MCF 10A (cell line): ENCODE measurements at regions of chr14 and their contacts with region 1.

Region 1: GRCh38 chr14:21263656-21264411 is 5.4 kb downstream of the HNRNPC start:
- DNase-seq: peak; percentile 72
- H3K4me3 Mint-ChIP-seq: peak overlapping the region; percentile 90
- H3K27ac Mint-ChIP-seq: peak overlapping the region; percentile 74
- H3K4me1 Mint-ChIP-seq: peaks cover 44% of the 10 kb centered on the region
- H3K27me3 Mint-ChIP-seq: no peaks in the 10 kb centered on the region
- CTCF ChIP-seq: no peak

Region 2: GRCh38 chr14:21241218-21241819 is 22.5 kb before region 1 on chr14:
- CTCF ChIA-PET with region 1: interaction called, 9 read pairs
- POLR2A ChIA-PET with region 1: interaction called, 38 read pairs
- intact Hi-C with region 1: no loop called
- DNase-seq: peak; percentile 34
- H3K4me3 Mint-ChIP-seq: no peak overlapping the region
- H3K27ac Mint-ChIP-seq: peak overlapping the region; percentile 27
- H3K4me1 Mint-ChIP-seq: peaks cover 14% of the 10 kb centered on the region
- H3K27me3 Mint-ChIP-seq: no peaks in the 10 kb centered on the region
- CTCF ChIP-seq: peak; percentile 36

Region 3: DNA sequence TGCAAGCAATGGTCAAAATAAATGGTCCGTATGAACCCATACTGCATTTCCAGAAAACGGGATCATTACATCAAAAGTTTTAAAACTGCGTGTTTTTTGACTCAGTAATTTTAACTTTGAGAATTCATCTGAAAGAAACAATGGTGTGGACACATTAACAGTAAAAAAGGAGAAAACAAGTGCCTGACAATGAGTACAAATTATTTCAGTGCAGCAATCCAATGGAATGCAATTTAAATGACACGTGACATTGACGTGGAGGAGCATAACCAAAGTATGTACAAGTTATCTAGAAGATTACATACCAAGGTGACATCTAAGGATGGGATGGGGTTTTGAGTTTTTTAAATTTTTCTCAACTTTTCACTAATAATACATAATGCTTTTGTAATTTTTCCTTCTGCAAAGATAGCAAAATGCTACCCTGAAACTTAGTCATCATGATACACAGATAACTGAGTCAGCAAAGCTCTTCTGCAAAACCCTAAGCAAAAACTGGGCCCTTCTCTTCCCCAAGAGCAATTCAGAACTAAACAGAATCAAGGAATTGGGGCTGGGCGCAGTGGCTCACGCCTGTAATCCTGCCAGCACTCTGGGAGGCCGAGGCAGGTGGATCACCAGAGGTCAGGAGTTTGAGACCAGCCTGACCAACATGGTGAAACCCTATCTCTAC is 15.0 kb before region 1 on chr14:
- CTCF ChIA-PET with region 1: interaction called, 5 read pairs
- POLR2A ChIA-PET with region 1: interaction called, 82 read pairs
- intact Hi-C with region 1: loop called (anchors 2 kb)
- DNase-seq: no peak
- H3K4me3 Mint-ChIP-seq: no peak overlapping the region
- H3K27ac Mint-ChIP-seq: no peak overlapping the region
- H3K4me1 Mint-ChIP-seq: peaks cover 17% of the 10 kb centered on the region
- H3K27me3 Mint-ChIP-seq: no peaks in the 10 kb centered on the region
- CTCF ChIP-seq: no peak

Region 4: GRCh38 chr14:21308479-21309237 is 44.8 kb after region 1 on chr14:
- CTCF ChIA-PET with region 1: interaction called, 4 read pairs
- POLR2A ChIA-PET with region 1: interaction called, 31 read pairs
- intact Hi-C with region 1: no loop called
- DNase-seq: peak; percentile 97
- H3K4me3 Mint-ChIP-seq: peak overlapping the region; percentile 78
- H3K27ac Mint-ChIP-seq: peak overlapping the region; percentile 91
- H3K4me1 Mint-ChIP-seq: peaks cover 14% of the 10 kb centered on the region
- H3K27me3 Mint-ChIP-seq: peaks cover 10% of the 10 kb centered on the region
- CTCF ChIP-seq: no peak

Region 5: GRCh38 chr14:21383848-21384493 is 120.1 kb after region 1 on chr14 and contains the start of gene SUPT16H:
- CTCF ChIA-PET with region 1: interaction called, 4 read pairs
- POLR2A ChIA-PET with region 1: interaction called, 23 read pairs
- intact Hi-C with region 1: loop called (anchors 2 kb)
- DNase-seq: peak; percentile 95
- H3K4me3 Mint-ChIP-seq: peak within 1 kb of the TSS; percentile 100
- H3K27ac Mint-ChIP-seq: peak within 1 kb of the TSS; percentile 99
- H3K4me1 Mint-ChIP-seq: peaks cover 8% of the 10 kb centered on the region
- H3K27me3 Mint-ChIP-seq: no peaks in the 10 kb centered on the region
- CTCF ChIP-seq: no peak
- total RNA-seq, gene SUPT16H: 97.0 and 98.3 TPM in 2 replicates